Activated CD4-positive, alpha-beta T cell treated with anti-CD3 and anti-CD28 coated beads for 36 hours (primary cell): ENCODE measurements at regions of chr12 and their contacts with region 1.

Region 1: DNA sequence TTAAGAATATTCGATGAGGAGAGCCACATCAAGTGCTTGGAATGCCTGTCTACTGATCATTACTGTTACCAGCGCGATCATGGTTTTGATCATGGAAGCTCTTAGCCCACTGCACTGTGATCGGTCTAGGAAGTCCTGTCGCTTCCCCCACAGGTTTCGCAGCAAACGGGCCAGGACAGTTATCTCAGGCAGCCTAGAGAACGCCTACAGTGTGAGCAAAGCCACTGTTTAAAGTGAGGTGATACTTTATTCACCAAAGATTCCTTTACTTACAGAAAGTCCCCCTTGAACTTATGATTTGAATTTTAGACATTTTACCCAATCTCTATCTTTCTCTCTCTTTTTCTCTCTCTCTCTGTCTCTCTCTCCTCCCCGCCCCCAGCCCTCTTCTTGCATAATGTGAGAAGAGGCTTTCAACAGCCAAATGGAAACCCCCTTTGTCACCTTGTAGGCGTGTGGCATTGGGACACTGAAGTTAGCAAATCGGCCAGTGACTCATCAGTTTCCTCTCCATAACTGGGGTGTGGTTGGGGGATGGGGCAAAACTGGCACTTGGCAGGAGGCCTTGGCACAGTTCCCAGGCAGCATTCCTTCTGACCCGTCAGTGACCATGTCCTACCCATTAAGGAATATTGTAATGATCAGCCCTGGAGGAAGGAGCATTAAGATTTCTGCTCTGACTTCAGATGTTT is 214.8 kb downstream of the CHST11 start:
- DNase-seq: peak; percentile 95
- ATAC-seq: peak; percentile 84
- H3K4me3 Mint-ChIP-seq: peak overlapping the region; percentile 41
- H3K27ac Mint-ChIP-seq: peak overlapping the region; percentile 93
- H3K4me1 Mint-ChIP-seq: peaks cover 60% of the 10 kb centered on the region
- H3K27me3 Mint-ChIP-seq: no peaks in the 10 kb centered on the region

Region 2: DNA sequence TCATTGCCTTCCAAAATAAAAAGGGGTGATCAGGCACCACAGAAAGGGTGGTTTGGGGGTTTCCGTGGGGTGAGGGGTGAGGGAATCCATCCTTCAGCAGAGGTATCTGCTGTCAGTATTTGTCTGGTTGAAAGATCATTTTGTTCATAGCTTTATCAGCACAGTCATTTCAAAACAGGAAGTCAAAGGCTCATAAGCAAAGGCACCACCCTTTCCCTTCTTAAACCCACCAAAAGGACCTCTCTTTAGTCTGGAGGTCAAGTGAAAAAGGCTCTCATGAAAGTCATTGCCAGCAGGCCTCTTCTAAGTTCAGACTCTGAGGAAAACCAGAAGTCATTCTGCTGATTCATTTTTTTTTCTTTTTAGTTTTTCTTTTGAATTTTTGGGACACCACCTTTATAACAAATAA is 208.6 kb before region 1 on chr12:
- CTCF ChIA-PET with region 1: interaction called, 3 read pairs
- POLR2A ChIA-PET with region 1: no interaction called
- intact Hi-C with region 1: loop called in 1 of 2 experiments (anchors 1 kb)
- DNase-seq: peak; percentile 59
- ATAC-seq: peak; percentile 54
- H3K4me3 Mint-ChIP-seq: peak overlapping the region; percentile 56
- H3K27ac Mint-ChIP-seq: peak overlapping the region; percentile 97
- H3K4me1 Mint-ChIP-seq: peaks cover 80% of the 10 kb centered on the region
- H3K27me3 Mint-ChIP-seq: no peaks in the 10 kb centered on the region

Region 3: DNA sequence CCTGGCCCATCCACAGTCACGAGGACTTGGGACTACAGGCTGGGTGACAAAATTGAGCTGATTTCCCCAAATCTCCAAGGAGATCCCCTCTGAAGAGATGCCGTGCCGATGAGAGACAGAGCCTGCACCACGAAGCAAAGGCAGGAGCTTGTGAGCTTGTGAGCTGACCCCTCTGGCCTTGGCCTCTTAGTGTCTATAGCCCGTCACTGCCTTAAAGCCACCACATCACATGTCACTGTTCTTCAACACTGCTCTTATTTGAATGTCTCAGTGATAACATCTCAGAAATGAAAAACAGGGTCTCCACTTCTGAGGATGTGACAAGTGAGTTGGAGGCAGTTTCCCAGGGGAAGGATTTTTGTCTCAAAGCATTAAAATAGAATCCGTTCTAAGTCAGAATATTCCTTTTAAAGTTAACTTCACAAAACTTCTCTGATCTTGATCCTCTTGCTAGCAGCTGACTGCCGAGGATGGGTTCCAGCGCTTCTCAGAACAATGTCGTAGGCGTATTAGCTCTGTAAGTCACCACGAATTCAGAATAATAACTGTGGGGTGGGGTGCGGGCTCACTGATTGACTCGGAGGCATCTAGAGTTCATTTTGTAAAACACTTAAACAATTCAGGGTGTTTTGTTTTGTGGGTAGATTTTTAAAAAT is 177.3 kb before region 1 on chr12:
- CTCF ChIA-PET with region 1: no interaction called
- POLR2A ChIA-PET with region 1: no interaction called
- intact Hi-C with region 1: loop called in 1 of 2 experiments (anchors 1 kb)
- DNase-seq: peak; percentile 88
- ATAC-seq: peak; percentile 72
- H3K4me3 Mint-ChIP-seq: peak overlapping the region; percentile 35
- H3K27ac Mint-ChIP-seq: peak overlapping the region; percentile 85
- H3K4me1 Mint-ChIP-seq: peaks cover 88% of the 10 kb centered on the region
- H3K27me3 Mint-ChIP-seq: no peaks in the 10 kb centered on the region

Region 4: GRCh38 chr12:104615048-104615561 is 56.4 kb before region 1 on chr12:
- CTCF ChIA-PET with region 1: no interaction called
- POLR2A ChIA-PET with region 1: no interaction called
- intact Hi-C with region 1: no loop called
- DNase-seq: no peak
- ATAC-seq: no peak
- H3K4me3 Mint-ChIP-seq: no peak overlapping the region
- H3K27ac Mint-ChIP-seq: no peak overlapping the region
- H3K4me1 Mint-ChIP-seq: peaks cover 11% of the 10 kb centered on the region
- H3K27me3 Mint-ChIP-seq: no peaks in the 10 kb centered on the region

Region 5: GRCh38 chr12:104686196-104686595 is 14.6 kb after region 1 on chr12:
- CTCF ChIA-PET with region 1: interaction called, 3 read pairs
- POLR2A ChIA-PET with region 1: interaction called, 4 read pairs
- intact Hi-C with region 1: loop called in 1 of 2 experiments (anchors 2 kb)
- DNase-seq: no peak
- ATAC-seq: no peak
- H3K4me3 Mint-ChIP-seq: no peak overlapping the region
- H3K27ac Mint-ChIP-seq: peak overlapping the region; percentile 39
- H3K4me1 Mint-ChIP-seq: peaks cover 73% of the 10 kb centered on the region
- H3K27me3 Mint-ChIP-seq: no peaks in the 10 kb centered on the region

Region 6: DNA sequence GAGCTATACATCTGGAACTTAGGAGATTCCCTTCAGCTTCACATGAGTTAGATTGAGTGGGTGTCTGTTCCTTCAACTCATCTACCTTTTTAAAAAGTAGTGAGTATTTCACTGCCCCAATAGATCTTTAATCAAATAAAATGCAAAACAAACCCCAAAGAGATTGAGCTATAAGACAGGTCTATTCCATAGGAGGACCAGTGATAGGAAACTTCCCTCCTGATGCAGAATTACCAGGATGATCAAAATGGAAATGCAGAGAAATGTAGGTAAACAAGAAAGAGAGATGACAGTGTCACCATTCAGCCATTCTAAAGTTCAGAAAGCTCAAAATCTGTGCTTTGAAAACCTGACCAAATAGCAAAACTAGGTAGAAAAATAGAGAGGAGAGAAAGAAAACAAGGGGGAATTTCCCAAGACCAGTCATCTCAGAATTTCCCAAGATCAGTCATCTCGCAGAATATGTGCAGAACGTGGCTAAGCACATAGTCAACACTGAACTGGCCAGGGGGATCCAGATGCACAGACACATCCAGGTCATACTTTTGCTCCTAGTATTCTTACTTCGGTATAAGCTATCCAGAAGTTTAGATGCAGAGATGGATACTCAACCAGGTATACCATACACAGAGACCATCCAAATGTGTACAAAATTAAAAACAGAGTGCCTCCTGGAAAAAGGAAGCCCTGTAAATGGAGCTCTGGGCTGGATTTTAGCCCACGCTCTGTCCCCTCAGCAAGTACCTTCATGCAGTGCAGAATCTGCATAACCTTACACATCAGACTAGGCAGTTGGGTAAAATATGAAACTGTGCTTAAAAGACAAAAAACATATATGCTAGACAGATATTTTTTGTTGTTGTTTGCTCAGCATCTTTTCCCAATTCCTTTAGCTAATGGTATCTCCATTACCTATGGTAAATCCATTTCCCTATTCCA is 259.1 kb after region 1 on chr12:
- CTCF ChIA-PET with region 1: no interaction called
- POLR2A ChIA-PET with region 1: interaction called, 4 read pairs
- intact Hi-C with region 1: loop called in 1 of 2 experiments (anchors 1 kb)
- DNase-seq: peak; percentile 73
- ATAC-seq: peak; percentile 98
- H3K4me3 Mint-ChIP-seq: peak overlapping the region; percentile 30
- H3K27ac Mint-ChIP-seq: peak overlapping the region; percentile 77
- H3K4me1 Mint-ChIP-seq: peaks cover 29% of the 10 kb centered on the region
- H3K27me3 Mint-ChIP-seq: peaks cover 1% of the 10 kb centered on the region

Region 7: DNA sequence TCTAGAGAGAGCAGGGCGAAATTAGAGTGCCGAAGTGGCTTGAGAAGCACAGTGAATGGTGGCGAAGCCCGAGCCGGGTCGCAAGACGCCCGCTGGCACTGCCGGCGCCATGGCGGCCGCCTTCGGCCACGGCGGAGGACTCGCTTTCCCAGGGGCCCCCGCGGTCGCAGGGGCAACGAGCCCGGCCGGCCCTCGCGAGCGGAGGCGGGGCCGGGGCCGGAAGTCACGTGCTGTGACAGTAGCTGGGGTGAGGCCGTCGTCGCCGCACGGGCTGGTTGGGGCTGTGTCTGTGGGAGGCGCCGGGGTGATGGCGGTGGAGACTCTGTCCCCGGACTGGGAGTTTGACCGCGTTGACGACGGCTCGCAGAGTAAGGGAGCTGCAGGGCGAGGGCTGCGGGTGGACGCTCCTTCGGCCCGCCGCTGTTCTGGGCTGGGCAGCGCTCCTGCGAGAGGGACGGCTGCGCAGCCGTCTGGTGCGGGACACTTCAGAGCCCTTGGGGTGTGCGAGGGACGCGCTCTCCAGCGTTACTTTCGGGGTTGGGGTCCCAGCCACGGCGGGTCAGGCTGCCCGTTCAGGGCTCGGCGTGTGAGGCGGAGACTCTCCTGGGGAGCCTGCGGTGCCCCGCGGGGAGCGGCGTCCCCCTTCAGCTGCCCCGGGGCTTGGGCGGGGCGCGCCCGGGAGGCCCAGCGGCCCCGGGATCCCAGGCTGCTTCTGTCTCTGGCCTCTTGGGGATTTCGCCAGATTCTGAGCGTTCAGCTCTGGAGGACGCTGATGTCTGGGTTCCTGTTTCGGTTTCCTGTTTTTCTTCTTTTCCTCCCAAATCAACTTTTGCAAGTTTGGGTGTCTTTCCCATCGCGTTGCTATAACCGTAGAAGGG is 436.2 kb after region 1 on chr12 and contains the start of gene WASHC4:
- CTCF ChIA-PET with region 1: no interaction called
- POLR2A ChIA-PET with region 1: no interaction called
- intact Hi-C with region 1: no loop called
- DNase-seq: peak; percentile 97
- ATAC-seq: peak; percentile 96
- H3K4me3 Mint-ChIP-seq: peak within 1 kb of the TSS; percentile 93
- H3K27ac Mint-ChIP-seq: peak within 1 kb of the TSS; percentile 88
- H3K4me1 Mint-ChIP-seq: peaks cover 33% of the 10 kb centered on the region
- H3K27me3 Mint-ChIP-seq: peaks cover 13% of the 10 kb centered on the region
- total RNA-seq, gene WASHC4: 29.6 to 35.9 TPM